ENCODE measurements at regions of chr14 and their contacts with region 1.

Region 1: GRCh38 chr14:94129111-94129757 is at the start of gene IFI27L2:
- DNase-seq: peak in 8 of 9 donors; percentile 26 to 69 (median 40)
- ATAC-seq: peak; percentile 95
- H3K4me3 ChIP-seq: peak within 1 kb of the TSS; percentile 84
- H3K4me3 Mint-ChIP-seq: peak within 1 kb of the TSS; percentile 71 to 97 (median 87)
- H3K27ac ChIP-seq: peak within 1 kb of the TSS; percentile 65
- H3K27ac Mint-ChIP-seq: peak within 1 kb of the TSS; percentile 41 to 92 (median 72)
- H3K4me1 ChIP-seq: peaks cover 12 to 21% of the 10 kb centered on the region in 2 donors
- H3K4me1 Mint-ChIP-seq: peaks cover 16 to 24% (median 18%) of the 10 kb centered on the region in 7 donors
- H3K27me3 ChIP-seq: no peaks in the 10 kb centered on the region
- H3K27me3 Mint-ChIP-seq: peaks cover 0 to 22% (median 0%) of the 10 kb centered on the region in 5 donors
- total RNA-seq, gene IFI27L2: 17.2 to 65.8 (median 26.5) TPM

Region 2: DNA sequence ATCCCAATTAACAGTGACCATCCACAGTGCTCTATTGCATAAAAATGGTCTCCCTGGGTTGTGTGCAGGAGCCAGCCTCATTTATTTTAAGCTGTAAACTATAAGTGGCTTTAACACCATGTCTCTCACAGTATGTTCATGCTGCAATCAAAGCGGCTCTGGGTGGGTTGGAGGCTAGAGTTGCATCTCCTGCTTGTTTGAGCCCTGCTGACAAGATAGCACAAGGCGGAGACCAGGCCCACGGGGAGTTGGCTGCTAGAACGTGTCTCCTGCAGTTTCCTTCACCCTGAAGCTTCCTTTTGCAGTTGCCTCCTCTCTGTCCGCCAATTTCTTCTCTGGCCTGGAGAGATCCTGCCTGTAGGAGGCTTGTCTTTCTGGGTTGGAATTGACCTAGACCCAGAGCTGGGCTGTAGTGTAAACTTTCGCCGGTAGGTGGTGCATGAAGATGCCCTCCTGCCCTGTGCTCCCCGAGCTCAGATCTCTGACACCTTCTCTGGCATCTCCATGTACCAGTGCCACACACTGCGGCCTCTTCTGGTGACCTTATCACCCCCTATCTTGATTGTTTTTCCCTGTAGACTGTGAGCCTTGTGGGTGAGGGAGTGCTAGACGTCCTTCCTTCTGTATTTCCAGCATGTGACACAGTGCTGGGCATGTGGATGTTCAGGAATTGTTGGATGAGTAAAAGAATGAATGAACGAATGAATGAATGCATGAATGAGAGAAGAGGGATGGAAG is 92.8 kb before region 1 on chr14:
- CTCF ChIA-PET with region 1: interaction called, 19 read pairs
- POLR2A ChIA-PET with region 1: no interaction called
- intact Hi-C with region 1: loop called in 1 of 2 experiments (anchors 1 kb)
- DNase-seq: peak; percentile 40 to 77 (median 64)
- ATAC-seq: peak; percentile 90
- H3K4me3 ChIP-seq: no peak overlapping the region
- H3K4me3 Mint-ChIP-seq: no peak overlapping the region
- H3K27ac ChIP-seq: no peak overlapping the region
- H3K27ac Mint-ChIP-seq: peak overlapping the region in 2 of 9 donors; percentile 8 to 78
- H3K4me1 ChIP-seq: no peaks in the 10 kb centered on the region
- H3K4me1 Mint-ChIP-seq: peaks cover 3 to 8% (median 4%) of the 10 kb centered on the region in 7 donors
- H3K27me3 ChIP-seq: no peaks in the 10 kb centered on the region
- H3K27me3 Mint-ChIP-seq: no peaks in the 10 kb centered on the region

Region 3: DNA sequence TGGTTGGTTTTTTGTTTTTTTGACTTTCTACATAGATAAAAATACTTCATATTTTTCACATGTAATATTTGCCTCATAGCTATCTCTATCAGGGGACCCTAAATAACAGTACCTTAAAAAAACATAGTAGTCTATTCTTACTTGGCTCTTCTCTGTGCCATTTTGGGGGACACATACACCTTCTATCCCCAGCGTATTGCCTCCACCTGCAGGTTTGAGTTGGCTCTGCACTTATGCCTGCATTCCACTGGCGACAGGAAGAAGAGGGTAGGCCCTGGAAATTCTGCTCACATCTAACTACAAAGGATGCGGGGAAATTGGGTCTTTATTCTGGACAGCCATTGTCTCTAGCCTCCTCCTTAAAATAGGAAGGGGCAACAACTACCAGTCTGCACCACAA is 14.0 kb after region 1 on chr14:
- CTCF ChIA-PET with region 1: interaction called, 11 read pairs
- POLR2A ChIA-PET with region 1: no interaction called
- intact Hi-C with region 1: no loop called
- DNase-seq: no peak
- ATAC-seq: no peak
- H3K4me3 ChIP-seq: no peak overlapping the region
- H3K4me3 Mint-ChIP-seq: no peak overlapping the region
- H3K27ac ChIP-seq: no peak overlapping the region
- H3K27ac Mint-ChIP-seq: no peak overlapping the region
- H3K4me1 ChIP-seq: peaks cover 0 to 6% of the 10 kb centered on the region in 2 donors
- H3K4me1 Mint-ChIP-seq: peaks cover 3 to 17% (median 15%) of the 10 kb centered on the region in 7 donors
- H3K27me3 ChIP-seq: no peaks in the 10 kb centered on the region
- H3K27me3 Mint-ChIP-seq: peaks cover 0 to 13% (median 0%) of the 10 kb centered on the region in 5 donors

Region 4: DNA sequence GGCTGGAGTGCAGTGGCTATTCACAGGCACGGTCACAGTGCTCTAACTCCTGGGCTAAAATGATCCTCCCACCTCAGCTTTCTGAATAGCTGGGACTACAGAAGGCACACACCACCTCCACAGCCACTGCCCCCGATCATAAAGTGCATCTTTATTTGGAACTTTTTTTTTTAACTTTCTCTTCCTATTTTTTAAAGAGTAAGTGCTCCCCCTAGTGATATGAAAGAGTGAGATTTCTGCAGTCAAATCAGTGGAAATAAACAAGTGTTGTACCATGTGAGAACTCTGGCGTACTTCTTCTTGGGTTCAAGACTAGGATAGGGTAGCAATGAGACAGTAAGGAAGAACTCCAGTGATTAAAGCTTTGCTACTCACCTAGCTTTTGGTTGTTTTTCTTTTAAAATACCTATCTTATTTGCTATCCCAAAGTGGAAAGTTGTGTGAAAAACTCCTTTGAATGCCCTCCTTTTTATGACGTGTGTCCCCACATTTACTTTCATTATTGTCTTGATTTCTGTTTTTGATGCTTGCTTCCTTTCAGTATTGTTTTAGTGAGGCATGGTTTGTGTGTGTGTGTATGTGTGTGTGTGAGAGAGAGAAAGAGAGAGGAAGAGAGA is 51.5 kb after region 1 on chr14:
- CTCF ChIA-PET with region 1: interaction called, 90 read pairs
- POLR2A ChIA-PET with region 1: no interaction called
- intact Hi-C with region 1: loop called (anchors 1 kb)
- DNase-seq: peak in 7 of 9 donors; percentile 57 to 81 (median 71)
- ATAC-seq: peak; percentile 93
- H3K4me3 ChIP-seq: peak overlapping the region; percentile 5
- H3K4me3 Mint-ChIP-seq: peak overlapping the region in 8 of 10 donors; percentile 6 to 75 (median 50)
- H3K27ac ChIP-seq: peak overlapping the region; percentile 56
- H3K27ac Mint-ChIP-seq: peak overlapping the region in 8 of 9 donors; percentile 16 to 90 (median 74)
- H3K4me1 ChIP-seq: peaks cover 0 to 1% of the 10 kb centered on the region in 2 donors
- H3K4me1 Mint-ChIP-seq: peaks cover 10 to 23% (median 18%) of the 10 kb centered on the region in 7 donors
- H3K27me3 ChIP-seq: no peaks in the 10 kb centered on the region
- H3K27me3 Mint-ChIP-seq: peaks cover 0 to 36% (median 0%) of the 10 kb centered on the region in 5 donors

Region 5: DNA sequence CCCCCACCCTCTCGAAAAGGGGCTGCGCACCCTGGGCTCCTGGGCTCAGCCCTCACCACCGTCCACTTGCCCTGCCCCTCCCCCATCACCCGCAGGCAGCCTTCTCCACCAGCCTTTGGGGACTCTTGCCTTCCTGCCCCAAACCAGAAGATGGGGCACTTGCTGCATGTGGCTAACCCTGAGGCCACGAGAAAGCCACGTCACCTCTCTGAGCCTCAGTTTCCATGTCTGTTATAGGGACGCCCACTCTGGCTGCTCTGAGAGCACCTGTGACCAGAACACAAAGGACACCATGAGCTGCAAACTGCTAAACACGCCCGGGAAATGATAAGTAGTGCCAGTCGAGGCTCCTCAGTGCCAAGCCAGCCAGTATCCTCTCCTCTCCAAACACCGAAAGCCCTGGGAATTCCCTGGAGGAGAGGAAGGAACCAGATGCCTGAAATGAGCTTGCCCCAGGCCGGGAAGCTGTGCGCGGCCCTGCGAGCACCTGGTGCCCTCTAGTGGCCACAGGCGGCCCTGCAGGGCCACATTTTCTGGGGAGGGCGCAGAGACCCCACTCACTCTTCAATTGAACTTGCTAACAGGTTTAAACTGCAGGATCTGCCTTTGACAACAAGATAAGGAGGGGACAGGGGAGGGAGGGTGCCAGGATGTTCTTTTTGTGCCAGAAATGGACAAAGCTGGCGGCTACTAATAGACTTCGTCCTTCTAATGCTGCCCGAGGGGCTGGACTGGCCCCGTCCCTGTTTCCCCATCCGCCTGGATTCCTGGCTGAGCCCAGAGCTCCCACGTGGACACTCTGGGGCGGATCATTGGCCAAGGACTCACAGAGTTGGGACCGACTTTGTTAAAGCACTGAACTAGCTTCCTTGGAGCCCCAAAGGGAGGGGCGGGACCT is 357.0 kb after region 1 on chr14:
- CTCF ChIA-PET with region 1: interaction called, 8 read pairs
- POLR2A ChIA-PET with region 1: no interaction called
- intact Hi-C with region 1: loop called in 1 of 2 experiments (anchors 2 kb)
- DNase-seq: peak in 7 of 9 donors; percentile 13 to 56 (median 30)
- ATAC-seq: peak; percentile 66
- H3K4me3 ChIP-seq: no peak overlapping the region
- H3K4me3 Mint-ChIP-seq: no peak overlapping the region
- H3K27ac ChIP-seq: no peak overlapping the region
- H3K27ac Mint-ChIP-seq: no peak overlapping the region
- H3K4me1 ChIP-seq: no peaks in the 10 kb centered on the region
- H3K4me1 Mint-ChIP-seq: peaks cover 0 to 3% (median 0%) of the 10 kb centered on the region in 7 donors
- H3K27me3 ChIP-seq: peaks cover 0 to 3% of the 10 kb centered on the region in 2 donors
- H3K27me3 Mint-ChIP-seq: peaks cover 2 to 35% (median 26%) of the 10 kb centered on the region in 5 donors

Region 6: GRCh38 chr14:94548999-94549985 is 420.1 kb after region 1 on chr14:
- CTCF ChIA-PET with region 1: interaction called, 9 read pairs
- POLR2A ChIA-PET with region 1: no interaction called
- intact Hi-C with region 1: loop called in 1 of 2 experiments (anchors 5 kb)
- DNase-seq: peak in 6 of 9 donors; percentile 4 to 64 (median 21)
- ATAC-seq: no peak
- H3K4me3 ChIP-seq: no peak overlapping the region
- H3K4me3 Mint-ChIP-seq: no peak overlapping the region
- H3K27ac ChIP-seq: no peak overlapping the region
- H3K27ac Mint-ChIP-seq: no peak overlapping the region
- H3K4me1 ChIP-seq: no peaks in the 10 kb centered on the region
- H3K4me1 Mint-ChIP-seq: no peaks in the 10 kb centered on the region
- H3K27me3 ChIP-seq: peaks cover 0 to 3% of the 10 kb centered on the region in 2 donors
- H3K27me3 Mint-ChIP-seq: peaks cover 16 to 52% (median 39%) of the 10 kb centered on the region in 5 donors

Region 7: GRCh38 chr14:94646481-94646880 is 517.2 kb after region 1 on chr14:
- CTCF ChIA-PET with region 1: no interaction called
- POLR2A ChIA-PET with region 1: no interaction called
- intact Hi-C with region 1: no loop called
- DNase-seq: no peak
- ATAC-seq: no peak
- H3K4me3 ChIP-seq: no peak overlapping the region
- H3K4me3 Mint-ChIP-seq: no peak overlapping the region
- H3K27ac ChIP-seq: no peak overlapping the region
- H3K27ac Mint-ChIP-seq: no peak overlapping the region
- H3K4me1 ChIP-seq: no peaks in the 10 kb centered on the region
- H3K4me1 Mint-ChIP-seq: no peaks in the 10 kb centered on the region
- H3K27me3 ChIP-seq: no peaks in the 10 kb centered on the region
- H3K27me3 Mint-ChIP-seq: peaks cover 0 to 23% (median 14%) of the 10 kb centered on the region in 5 donors

Measured in naive thymus-derived CD4-positive, alpha-beta T cell (primary cell).